Activated CD4-positive, alpha-beta T cell treated with anti-CD3 and anti-CD28 coated beads, Interleukin-2, amount 10 ng/mL, durations not matched to agents 24 days and 14 days (primary cell): ENCODE measurements at regions of chr4 and their contacts with region 1.

Region 1: DNA sequence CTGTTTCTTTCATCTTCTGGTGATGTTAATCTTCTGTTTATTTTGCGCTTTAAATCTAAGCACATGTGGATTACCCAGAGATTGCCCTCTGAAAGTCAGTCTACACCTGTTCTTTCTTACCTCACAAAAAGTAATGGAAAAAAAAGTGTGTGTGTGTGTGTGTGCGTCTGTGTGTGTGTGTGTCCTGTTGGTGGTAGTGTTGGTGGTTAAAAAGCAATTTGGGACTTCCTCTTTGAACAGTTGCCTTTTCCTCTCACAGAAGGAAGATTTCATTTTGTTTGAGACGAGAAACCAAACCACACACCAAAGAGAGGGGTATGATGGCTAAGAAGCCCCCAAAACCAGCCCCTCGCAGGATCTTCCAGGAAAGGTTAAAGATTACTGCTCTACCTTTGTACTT is at the start of gene STAP1:
- DNase-seq: peak; percentile 87
- H3K4me3 Mint-ChIP-seq: peak within 1 kb of the TSS; percentile 84
- H3K27ac Mint-ChIP-seq: peak within 1 kb of the TSS; percentile 88
- H3K4me1 Mint-ChIP-seq: peaks cover 37% of the 10 kb centered on the region
- H3K27me3 Mint-ChIP-seq: no peaks in the 10 kb centered on the region
- total RNA-seq, gene STAP1: 15.0 and 15.6 TPM in 2 replicates

Region 2: GRCh38 chr4:67568820-67569219 is 10.3 kb after region 1 on chr4:
- intact Hi-C with region 1: loop called (anchors 1 kb)
- DNase-seq: no peak
- H3K4me3 Mint-ChIP-seq: no peak overlapping the region
- H3K27ac Mint-ChIP-seq: no peak overlapping the region
- H3K4me1 Mint-ChIP-seq: peaks cover 33% of the 10 kb centered on the region
- H3K27me3 Mint-ChIP-seq: no peaks in the 10 kb centered on the region

Region 3: DNA sequence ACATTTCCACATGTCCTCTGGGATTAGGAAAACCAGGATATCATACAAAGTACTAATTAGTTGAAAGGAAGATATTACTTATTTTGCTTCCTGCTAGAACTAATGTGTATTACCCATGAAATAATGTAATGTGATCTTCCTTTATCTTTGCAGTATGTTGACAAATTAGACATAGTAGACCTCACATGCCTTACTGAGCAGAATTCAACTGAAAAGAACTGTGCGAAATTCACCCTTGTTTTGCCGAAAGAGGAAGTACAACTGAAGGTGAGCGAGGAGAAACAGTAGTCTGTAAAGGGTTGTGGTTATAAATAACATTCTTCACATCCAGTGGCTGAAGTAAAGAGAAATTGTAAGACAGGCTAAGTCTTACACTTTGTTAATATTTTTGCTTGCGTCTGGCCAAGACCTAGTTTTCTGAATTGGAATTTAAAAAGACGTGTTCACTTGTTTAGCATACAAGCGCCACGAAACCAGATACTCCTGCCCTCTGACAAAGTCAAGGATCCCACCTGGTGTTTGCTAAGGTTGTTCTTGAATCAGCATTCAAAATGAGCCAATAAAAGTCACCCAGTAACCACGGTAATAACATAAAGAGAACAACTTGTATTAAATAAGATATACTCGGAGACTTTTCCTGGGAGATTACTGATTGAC is 16.9 kb after region 1 on chr4:
- intact Hi-C with region 1: loop called (anchors 2 kb)
- DNase-seq: peak; percentile 74
- H3K4me3 Mint-ChIP-seq: peak overlapping the region; percentile 68
- H3K27ac Mint-ChIP-seq: peak overlapping the region; percentile 83
- H3K4me1 Mint-ChIP-seq: peaks cover 42% of the 10 kb centered on the region
- H3K27me3 Mint-ChIP-seq: no peaks in the 10 kb centered on the region

Region 4: DNA sequence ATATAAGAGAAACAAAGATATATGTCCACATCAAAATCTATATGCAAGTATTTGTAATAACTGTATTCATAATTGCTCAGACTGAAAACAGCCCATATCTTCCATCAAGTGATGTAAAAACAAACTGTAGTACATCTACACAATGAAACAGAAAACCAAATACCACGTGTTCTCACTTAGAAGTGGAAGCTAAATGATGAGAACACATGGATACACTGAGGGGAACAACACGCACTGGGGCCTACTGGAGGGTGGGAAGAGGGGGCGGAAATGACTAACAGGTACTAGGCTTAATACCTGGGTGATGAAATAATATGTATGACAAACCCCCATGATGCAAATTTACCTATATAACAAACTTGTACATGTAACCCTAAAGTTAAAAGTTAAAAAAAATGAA is 99.8 kb after region 1 on chr4:
- intact Hi-C with region 1: no loop called
- DNase-seq: no peak
- H3K4me3 Mint-ChIP-seq: no peak overlapping the region
- H3K27ac Mint-ChIP-seq: peak overlapping the region; percentile 61
- H3K4me1 Mint-ChIP-seq: peaks cover 10% of the 10 kb centered on the region
- H3K27me3 Mint-ChIP-seq: no peaks in the 10 kb centered on the region

Region 5: GRCh38 chr4:67909905-67910584 is 351.6 kb after region 1 on chr4:
- intact Hi-C with region 1: loop called (anchors 2 kb)
- DNase-seq: no peak
- H3K4me3 Mint-ChIP-seq: no peak overlapping the region
- H3K27ac Mint-ChIP-seq: no peak overlapping the region
- H3K4me1 Mint-ChIP-seq: no peaks in the 10 kb centered on the region
- H3K27me3 Mint-ChIP-seq: peaks cover 17% of the 10 kb centered on the region